Ascending aorta (tissue), 2 donors: ENCODE measurements at regions of chr1 and their contacts with region 1.

Region 1: GRCh38 chr1:67853704-67854103 is 20.4 kb upstream of the GNG12 start:
- DNase-seq: no peak
- H3K4me3 ChIP-seq: no peak overlapping the region
- H3K27ac ChIP-seq: no peak overlapping the region
- H3K4me1 ChIP-seq: peaks cover 4 to 7% of the 10 kb centered on the region in 2 donors
- H3K27me3 ChIP-seq: no peaks in the 10 kb centered on the region
- CTCF ChIP-seq: peak in 1 of 3 experiments; percentile 47

Region 2: DNA sequence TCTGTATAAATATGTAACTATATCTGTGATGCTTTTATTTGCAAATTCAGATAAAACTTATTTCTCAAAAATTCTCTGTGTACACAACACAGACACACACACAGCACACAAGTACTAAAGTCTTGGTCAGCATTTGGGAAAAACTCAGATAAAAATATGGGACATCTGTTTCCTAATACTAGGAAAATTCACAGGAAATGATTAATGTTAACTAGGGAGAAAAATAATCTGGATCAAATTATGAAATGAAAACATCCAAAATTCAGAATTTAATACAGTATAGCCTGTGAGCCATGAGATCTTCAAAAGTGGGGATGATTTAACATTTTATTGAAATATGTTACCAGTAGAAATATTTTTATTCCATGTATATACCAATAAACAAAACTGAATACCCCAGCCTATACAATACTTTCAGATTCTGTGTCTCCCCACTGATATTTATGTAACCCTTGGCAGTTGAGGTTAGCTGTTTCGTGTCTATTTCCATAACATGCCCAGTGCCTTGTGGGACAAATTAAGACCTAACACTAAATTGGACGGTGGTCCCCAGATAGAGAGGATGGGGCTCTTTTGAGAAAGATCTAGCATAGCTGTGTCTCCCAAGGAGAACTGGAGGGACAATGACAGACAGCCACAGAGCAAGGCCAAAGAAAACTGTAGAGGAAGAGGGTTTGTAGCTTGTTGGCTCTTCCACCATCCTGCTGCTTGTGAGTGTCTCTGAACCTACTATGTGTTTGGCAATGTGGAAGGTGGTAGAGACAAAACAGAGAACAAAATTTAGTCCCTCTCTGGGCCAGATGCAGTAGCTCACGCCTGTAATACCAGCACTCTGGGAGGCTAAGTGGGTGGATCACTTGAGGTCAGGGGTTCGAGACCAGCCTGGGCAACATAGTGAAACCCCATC is 67.6 kb before region 1 on chr1:
- intact Hi-C with region 1: no loop called
- DNase-seq: no peak
- H3K4me3 ChIP-seq: no peak overlapping the region
- H3K27ac ChIP-seq: peak overlapping the region; percentile 34 to 61
- H3K4me1 ChIP-seq: peaks cover 4 to 57% of the 10 kb centered on the region in 2 donors
- H3K27me3 ChIP-seq: no peaks in the 10 kb centered on the region
- CTCF ChIP-seq: no peak

Region 3: DNA sequence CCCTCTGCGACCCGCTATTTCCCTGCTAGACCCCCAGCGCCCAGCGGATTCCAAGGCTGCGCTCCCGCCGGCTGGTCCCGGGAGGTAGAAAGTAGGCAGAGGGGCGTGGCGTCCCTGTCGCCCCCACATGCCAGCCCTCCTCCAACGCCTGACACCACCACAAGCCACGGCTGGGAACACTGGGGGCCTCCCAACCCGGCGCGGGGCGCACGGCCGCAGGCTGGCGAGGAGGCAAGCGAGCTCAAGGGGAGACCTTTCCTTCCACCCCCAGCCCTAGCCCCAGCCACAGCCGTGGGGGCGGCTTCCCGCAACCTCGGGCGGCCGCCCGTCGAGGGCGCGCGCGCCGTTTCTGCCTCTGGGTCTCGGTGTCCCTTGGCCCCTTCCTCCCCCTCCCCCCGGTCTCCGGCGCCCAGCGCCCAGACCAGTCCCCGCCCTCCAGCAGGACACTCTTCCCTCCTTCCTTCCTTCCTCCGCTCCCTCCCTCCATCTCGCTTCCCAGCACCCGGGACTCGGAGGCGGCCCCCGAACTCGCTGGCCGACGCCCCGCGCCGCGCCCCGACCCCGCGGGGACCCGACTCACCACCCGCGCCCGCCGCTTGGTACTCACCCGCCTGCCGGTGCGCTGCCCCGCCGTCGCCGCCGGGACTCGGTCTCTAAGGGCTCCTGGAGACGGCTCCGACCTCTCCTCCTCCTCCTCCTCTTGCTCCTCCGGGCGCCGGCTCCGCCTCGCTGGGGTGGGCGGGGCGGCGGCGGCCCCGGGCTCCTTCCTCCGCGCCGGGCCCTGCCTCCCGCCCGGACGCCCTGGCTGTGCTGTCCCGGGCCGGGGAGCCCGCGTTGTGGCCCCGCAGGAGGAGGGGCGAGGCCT is 20.7 kb before region 1 on chr1 and contains the start of gene GNG12:
- intact Hi-C with region 1: no loop called
- DNase-seq: peak; percentile 14 to 81
- H3K4me3 ChIP-seq: peak within 1 kb of the TSS; percentile 70 to 85
- H3K27ac ChIP-seq: peak within 1 kb of the TSS; percentile 93 to 96
- H3K4me1 ChIP-seq: peaks cover 4 to 29% of the 10 kb centered on the region in 2 donors
- H3K27me3 ChIP-seq: no peaks in the 10 kb centered on the region
- CTCF ChIP-seq: no peak
- total RNA-seq, gene GNG12: 71.2 TPM

Region 4: GRCh38 chr1:68051475-68051874 is 197.8 kb after region 1 on chr1:
- intact Hi-C with region 1: loop called (anchors 5 kb)
- DNase-seq: no peak
- H3K4me3 ChIP-seq: peak overlapping the region; percentile 50 to 64
- H3K27ac ChIP-seq: no peak overlapping the region
- H3K4me1 ChIP-seq: no peaks in the 10 kb centered on the region
- H3K27me3 ChIP-seq: no peaks in the 10 kb centered on the region
- CTCF ChIP-seq: peak; percentile 30 to 53 (median 45)

Region 5: DNA sequence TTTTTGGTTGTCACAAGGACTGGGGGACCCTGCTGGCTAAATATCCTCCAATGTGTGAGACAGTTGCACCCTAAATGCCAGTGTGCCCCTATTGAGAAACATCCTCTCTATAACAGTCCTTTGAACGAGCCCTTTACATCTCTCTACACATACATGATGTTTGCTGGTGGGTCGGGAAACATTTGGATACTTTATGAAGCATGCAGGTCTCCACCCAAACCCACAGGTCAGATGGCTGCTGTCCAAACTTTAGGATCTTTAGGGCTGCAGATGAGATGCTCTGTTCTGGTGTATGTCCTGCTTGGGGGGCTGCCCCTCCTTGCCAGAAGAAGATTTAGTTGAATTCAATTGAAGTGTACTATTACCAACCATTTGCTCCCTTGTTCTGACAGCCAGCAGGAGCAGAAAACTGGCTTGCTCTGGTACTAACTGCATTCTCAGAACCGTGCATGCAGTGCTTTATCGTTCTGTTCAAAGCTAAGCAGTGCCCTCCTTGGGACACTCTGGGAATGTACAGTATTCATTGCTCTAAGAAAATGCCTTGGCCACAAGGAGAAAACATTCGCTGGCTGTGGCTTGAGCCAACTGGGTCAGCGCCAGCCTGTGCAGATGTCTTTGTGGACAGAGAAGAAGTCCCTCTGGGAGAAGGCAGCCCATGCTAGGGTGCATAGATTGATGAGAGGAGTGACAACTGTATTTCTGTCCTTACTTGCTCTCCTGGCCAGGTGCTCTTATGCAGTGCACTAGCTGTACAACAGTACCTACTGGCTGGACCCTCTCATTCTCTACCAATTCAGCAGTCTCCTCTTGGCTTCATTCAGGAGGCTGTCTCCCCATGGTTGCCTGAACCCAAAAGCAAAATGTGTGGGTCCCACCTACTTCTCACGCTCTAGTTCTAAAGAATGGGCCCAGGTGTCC is 258.1 kb after region 1 on chr1:
- intact Hi-C with region 1: loop called (anchors 2 kb)
- DNase-seq: peak in 1 of 2 donors; percentile 76
- H3K4me3 ChIP-seq: no peak overlapping the region
- H3K27ac ChIP-seq: peak overlapping the region in 1 of 2 donors; percentile 12
- H3K4me1 ChIP-seq: peaks cover 0 to 12% of the 10 kb centered on the region in 2 donors
- H3K27me3 ChIP-seq: no peaks in the 10 kb centered on the region
- CTCF ChIP-seq: peak; percentile 46 to 60 (median 51)

Region 6: DNA sequence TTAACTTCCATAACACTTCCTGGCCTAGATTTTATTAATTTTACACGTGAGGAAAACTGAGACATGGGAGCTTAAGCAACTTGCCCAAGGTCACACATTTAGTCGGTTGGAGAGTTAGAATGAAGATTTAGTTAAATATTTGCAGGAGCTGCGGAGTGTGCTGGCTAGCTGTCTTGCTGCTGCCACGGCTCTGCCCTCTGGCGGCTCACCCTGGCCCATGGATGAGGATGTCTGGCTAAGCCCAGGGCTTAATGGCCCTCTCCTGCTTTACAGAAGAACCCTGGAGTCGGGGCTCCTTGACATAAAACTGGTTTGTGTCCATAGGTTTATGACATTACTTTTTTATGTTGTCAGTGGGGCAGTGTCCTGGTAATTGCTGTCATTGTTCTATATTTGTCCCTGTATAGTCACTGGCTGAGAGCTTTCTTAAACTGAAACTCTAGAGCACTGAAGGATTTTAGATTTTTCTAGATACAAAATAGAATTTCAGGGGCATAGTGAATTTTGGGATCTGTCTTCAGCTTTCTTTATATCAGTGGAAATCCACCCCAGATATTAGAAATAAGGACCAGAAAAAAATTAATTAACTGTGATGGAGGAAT is 467.5 kb after region 1 on chr1:
- intact Hi-C with region 1: loop called (anchors 10 kb)
- DNase-seq: peak in 1 of 2 donors; percentile 79
- H3K4me3 ChIP-seq: no peak overlapping the region
- H3K27ac ChIP-seq: no peak overlapping the region
- H3K4me1 ChIP-seq: peaks cover 0 to 2% of the 10 kb centered on the region in 2 donors
- H3K27me3 ChIP-seq: no peaks in the 10 kb centered on the region
- CTCF ChIP-seq: peak; percentile 36 to 70 (median 51)